SK-N-SH (cell line): ENCODE measurements at regions of chr3 and their contacts with region 1.

Region 1: DNA sequence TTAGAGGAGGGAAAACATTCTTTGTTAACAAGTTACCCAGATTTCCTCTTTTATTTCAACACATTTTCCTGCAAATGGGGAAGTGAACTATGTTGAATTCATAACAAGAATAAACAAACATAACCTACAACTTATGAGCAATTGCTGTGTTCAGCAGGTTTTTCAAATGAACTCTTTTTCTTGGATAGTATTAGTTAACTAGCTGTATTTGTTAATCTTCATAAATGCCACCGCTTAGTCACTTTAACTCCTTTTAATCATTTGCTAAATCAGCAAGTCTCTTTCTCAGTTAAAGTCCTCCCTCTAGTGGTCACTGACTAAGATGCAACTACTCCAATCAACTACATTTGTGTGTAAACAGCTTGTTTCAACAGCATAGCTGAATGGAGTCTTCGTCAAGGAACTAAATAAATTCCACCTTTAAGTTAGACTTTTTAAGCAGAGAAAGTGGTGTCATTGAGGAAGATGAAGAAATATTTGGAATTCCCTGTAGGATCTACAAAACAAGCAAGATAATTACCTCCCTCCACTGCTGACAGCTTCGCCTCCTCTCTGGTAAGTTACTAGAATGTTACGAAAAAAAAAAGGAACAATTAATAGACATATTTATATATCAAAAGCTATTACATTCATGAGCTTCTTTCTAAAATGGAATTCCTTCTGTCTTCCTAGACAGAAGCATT is 1122.0 kb downstream of the ROBO1 start:
- DNase-seq: peak; percentile 36
- H3K4me3 ChIP-seq: no peak overlapping the region; a peak in 1 of 4 replicates
- H3K27ac ChIP-seq: no peak overlapping the region
- H3K4me1 ChIP-seq: no peaks in the 10 kb centered on the region
- H3K27me3 ChIP-seq: no peaks in the 10 kb centered on the region
- CTCF ChIP-seq: peak; percentile 94
- EP300 ChIP-seq: no peak
- RAD21 ChIP-seq: peak; percentile 93

Region 2: GRCh38 chr3:77348231-77348855 is 1297.4 kb before region 1 on chr3:
- CTCF ChIA-PET with region 1: interaction called, 22 read pairs
- POLR2A ChIA-PET with region 1: no interaction called
- DNase-seq: peak; percentile 1
- H3K4me3 ChIP-seq: no peak overlapping the region; a peak in 1 of 4 replicates
- H3K27ac ChIP-seq: no peak overlapping the region
- H3K4me1 ChIP-seq: no peaks in the 10 kb centered on the region
- H3K27me3 ChIP-seq: no peaks in the 10 kb centered on the region
- CTCF ChIP-seq: peak; percentile 59
- EP300 ChIP-seq: no peak
- RAD21 ChIP-seq: peak; percentile 69

Region 3: DNA sequence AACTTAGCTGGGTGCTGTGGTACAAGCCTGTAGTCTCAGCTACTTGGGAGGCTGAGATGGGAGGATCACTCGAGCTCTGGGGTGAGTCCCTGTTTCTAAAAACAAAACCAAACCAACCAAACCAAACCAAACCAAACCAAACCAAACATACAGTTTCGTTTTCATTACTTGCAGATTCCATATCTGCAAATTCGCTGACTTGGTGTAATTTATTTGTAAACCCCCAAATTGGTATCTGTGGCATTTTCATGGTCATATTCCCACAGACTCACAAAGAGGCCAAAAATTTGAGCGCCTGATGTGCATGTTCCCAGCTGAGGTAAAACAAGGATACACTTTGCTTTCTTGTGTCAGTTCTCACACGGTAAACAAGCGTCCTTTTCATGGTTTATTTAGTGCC is 16.2 kb before region 1 on chr3:
- CTCF ChIA-PET with region 1: interaction called, 11 read pairs
- POLR2A ChIA-PET with region 1: no interaction called
- DNase-seq: no peak
- H3K4me3 ChIP-seq: no peak overlapping the region
- H3K27ac ChIP-seq: no peak overlapping the region
- H3K4me1 ChIP-seq: no peaks in the 10 kb centered on the region
- H3K27me3 ChIP-seq: no peaks in the 10 kb centered on the region
- CTCF ChIP-seq: no peak
- EP300 ChIP-seq: no peak
- RAD21 ChIP-seq: no peak

Region 4: DNA sequence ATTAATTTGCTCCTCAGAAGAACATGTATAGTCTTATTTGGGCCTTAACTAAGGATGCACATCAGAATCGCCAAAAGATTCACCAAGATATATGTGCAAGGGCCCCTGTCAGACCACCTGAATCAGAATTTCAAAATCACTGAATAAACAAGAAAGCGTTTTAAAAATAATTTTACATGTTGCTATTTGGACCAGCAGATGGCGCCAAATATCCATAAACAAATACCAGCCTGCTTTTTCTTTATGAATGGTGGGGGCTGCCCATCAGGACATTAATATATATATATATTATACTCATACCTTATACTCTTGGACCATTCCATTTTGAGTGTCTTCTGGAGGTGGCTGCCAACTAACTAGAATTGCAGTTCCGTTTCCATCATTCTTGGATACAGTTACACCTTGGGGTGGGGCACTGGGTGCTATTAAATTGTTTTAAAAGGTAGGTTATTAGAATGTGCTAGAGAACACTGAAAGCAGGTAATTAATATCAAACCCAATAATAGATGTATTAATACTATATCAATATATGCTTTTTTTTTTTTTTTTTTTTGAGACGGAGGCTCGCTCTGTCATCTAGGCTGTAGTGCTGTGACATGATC is 13.7 kb after region 1 on chr3:
- CTCF ChIA-PET with region 1: interaction called, 32 read pairs
- POLR2A ChIA-PET with region 1: no interaction called
- DNase-seq: peak; percentile 21
- H3K4me3 ChIP-seq: no peak overlapping the region
- H3K27ac ChIP-seq: no peak overlapping the region
- H3K4me1 ChIP-seq: no peaks in the 10 kb centered on the region
- H3K27me3 ChIP-seq: no peaks in the 10 kb centered on the region
- CTCF ChIP-seq: peak; percentile 76
- EP300 ChIP-seq: no peak
- RAD21 ChIP-seq: peak; percentile 84